Activated CD4-positive, alpha-beta memory T cell treated with anti-CD3 and anti-CD28 coated beads for 36 hours (primary cell): ENCODE measurements at regions of chr4 and their contacts with region 1.

Region 1: GRCh38 chr4:100533741-100534140 is 15.9 kb upstream of the EMCN start:
- DNase-seq: no peak
- H3K4me3 Mint-ChIP-seq: no peak overlapping the region
- H3K27ac Mint-ChIP-seq: no peak overlapping the region
- H3K4me1 Mint-ChIP-seq: peaks cover 5% of the 10 kb centered on the region
- H3K27me3 Mint-ChIP-seq: peaks cover 6% of the 10 kb centered on the region

Region 2: DNA sequence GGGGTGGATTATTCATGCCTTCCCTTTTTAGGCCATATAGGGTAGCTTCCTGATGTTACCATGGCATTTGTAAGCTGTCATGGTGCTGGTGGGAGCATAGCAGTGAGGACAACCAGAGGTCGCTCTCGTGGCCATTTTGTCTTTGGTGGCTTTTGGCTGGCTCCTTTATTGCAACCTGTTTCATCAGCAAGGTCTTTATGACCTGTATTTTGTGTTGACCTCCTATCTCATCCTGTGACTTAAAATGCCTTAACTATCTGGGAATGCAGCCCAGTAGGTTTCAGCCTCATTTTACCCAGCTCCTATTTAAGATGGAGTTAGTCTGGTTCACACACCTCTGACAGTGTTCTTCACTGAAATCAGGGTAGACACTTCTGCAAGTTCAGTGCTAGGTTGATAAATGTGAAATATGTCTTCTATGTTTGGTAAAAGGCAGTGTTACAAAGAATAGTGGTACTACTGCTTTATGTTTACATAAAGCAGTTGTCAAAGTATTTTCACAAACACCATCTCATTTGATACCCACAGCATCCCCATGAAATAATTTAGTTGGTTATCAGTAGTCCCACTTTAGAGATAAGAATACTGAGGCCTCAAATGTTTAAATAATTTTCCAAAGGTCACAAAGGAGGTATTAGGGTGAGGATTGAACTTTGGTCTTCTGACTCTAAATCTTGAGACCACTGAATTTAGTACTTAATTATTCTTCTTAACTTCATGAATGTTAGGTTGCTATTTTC is 799.0 kb before region 1 on chr4:
- CTCF ChIA-PET with region 1: no interaction called
- POLR2A ChIA-PET with region 1: no interaction called
- intact Hi-C with region 1: loop called (anchors 5 kb)
- DNase-seq: no peak
- H3K4me3 Mint-ChIP-seq: no peak overlapping the region
- H3K27ac Mint-ChIP-seq: no peak overlapping the region
- H3K4me1 Mint-ChIP-seq: no peaks in the 10 kb centered on the region
- H3K27me3 Mint-ChIP-seq: peaks cover 9% of the 10 kb centered on the region

Region 3: DNA sequence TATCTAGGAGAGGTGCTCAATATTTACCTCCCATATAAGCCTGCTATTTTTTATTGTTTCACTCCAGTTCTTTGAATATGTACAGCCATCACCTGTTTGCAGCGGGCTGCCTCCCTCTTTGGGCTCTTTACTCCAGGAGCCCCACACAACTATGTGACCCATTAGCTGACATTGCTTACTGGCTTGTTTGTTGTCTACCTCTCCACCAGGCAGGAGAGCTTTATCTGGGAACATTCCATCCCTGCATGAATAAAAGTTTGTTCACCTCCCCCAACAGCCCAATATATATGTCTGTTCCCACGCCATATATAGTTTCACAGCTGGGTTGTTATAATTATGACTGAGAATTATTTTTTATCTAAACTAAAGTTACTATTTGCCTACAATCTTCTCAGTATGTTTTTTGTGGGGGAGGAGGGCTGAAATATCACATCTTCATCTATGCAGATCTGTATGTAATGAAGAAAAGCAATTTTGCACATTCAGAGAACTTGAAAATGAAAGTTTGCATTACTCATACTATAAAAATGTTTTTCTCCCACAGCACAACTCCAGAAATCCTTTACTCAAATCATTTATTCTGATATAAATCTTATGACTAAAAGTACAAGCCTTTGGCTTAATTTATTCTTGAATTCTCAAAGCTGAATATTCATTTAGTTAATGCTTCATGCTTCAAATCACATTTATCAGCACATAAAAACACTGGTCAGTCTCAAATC is 778.4 kb before region 1 on chr4:
- CTCF ChIA-PET with region 1: no interaction called
- POLR2A ChIA-PET with region 1: no interaction called
- intact Hi-C with region 1: no loop called
- DNase-seq: no peak
- H3K4me3 Mint-ChIP-seq: no peak overlapping the region
- H3K27ac Mint-ChIP-seq: no peak overlapping the region
- H3K4me1 Mint-ChIP-seq: peaks cover 26% of the 10 kb centered on the region
- H3K27me3 Mint-ChIP-seq: peaks cover 7% of the 10 kb centered on the region

Region 4: DNA sequence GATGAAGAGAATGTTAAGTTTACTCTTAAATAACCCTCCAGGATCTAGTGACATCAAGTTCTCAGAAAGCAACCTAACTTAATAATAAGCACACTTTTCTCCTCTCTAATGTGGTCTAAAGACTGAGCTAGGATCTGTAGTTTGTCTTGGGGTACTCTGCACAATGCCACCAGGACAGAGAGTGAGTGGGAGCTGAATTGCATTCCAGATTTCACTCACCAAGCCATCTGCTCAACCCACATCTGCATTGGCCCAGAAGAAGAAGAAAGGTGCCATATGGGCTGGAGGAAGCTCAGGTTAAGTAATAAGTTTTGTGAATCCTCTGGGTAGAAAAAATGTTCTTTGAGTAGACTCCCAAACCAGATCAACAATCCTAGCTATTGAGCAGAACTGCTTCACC is 429.0 kb after region 1 on chr4:
- CTCF ChIA-PET with region 1: no interaction called
- POLR2A ChIA-PET with region 1: no interaction called
- intact Hi-C with region 1: no loop called
- DNase-seq: no peak
- H3K4me3 Mint-ChIP-seq: no peak overlapping the region
- H3K27ac Mint-ChIP-seq: no peak overlapping the region
- H3K4me1 Mint-ChIP-seq: no peaks in the 10 kb centered on the region
- H3K27me3 Mint-ChIP-seq: peaks cover 2% of the 10 kb centered on the region